Activated B cell treated with CpG ODN at 0.5 μM for 24 hours (primary cell): ENCODE measurements at regions of chr6 and their contacts with region 1.

Region 1: GRCh38 chr6:42166444-42167141 is 6.6 kb upstream of the GUCA1A start:
- DNase-seq: peak; percentile 50
- ATAC-seq: peak; percentile 91
- H3K4me3 Mint-ChIP-seq: no peak overlapping the region
- H3K27ac Mint-ChIP-seq: peak overlapping the region; percentile 31
- H3K4me1 Mint-ChIP-seq: no peaks in the 10 kb centered on the region
- H3K27me3 Mint-ChIP-seq: peaks cover 6% of the 10 kb centered on the region
- CTCF ChIP-seq: no peak

Region 2: GRCh38 chr6:41602864-41603608 is 563.6 kb before region 1 on chr6:
- CTCF ChIA-PET with region 1: no interaction called
- POLR2A ChIA-PET with region 1: no interaction called
- intact Hi-C with region 1: loop called (anchors 5 kb)
- DNase-seq: peak; percentile 55
- ATAC-seq: peak; percentile 85
- H3K4me3 Mint-ChIP-seq: peak overlapping the region; percentile 46
- H3K27ac Mint-ChIP-seq: no peak overlapping the region
- H3K4me1 Mint-ChIP-seq: peaks cover 10% of the 10 kb centered on the region
- H3K27me3 Mint-ChIP-seq: no peaks in the 10 kb centered on the region
- CTCF ChIP-seq: no peak

Region 3: GRCh38 chr6:42075159-42075838 is 91.3 kb before region 1 on chr6:
- CTCF ChIA-PET with region 1: interaction called, 3 read pairs
- POLR2A ChIA-PET with region 1: no interaction called
- intact Hi-C with region 1: loop called (anchors 1 kb)
- DNase-seq: peak; percentile 46
- ATAC-seq: no peak
- H3K4me3 Mint-ChIP-seq: no peak overlapping the region
- H3K27ac Mint-ChIP-seq: no peak overlapping the region
- H3K4me1 Mint-ChIP-seq: no peaks in the 10 kb centered on the region
- H3K27me3 Mint-ChIP-seq: no peaks in the 10 kb centered on the region
- CTCF ChIP-seq: no peak

Region 4: GRCh38 chr6:42104095-42104806 is 62.3 kb before region 1 on chr6:
- CTCF ChIA-PET with region 1: interaction called, 3 read pairs
- POLR2A ChIA-PET with region 1: no interaction called
- intact Hi-C with region 1: loop called (anchors 1 kb)
- DNase-seq: peak; percentile 56
- ATAC-seq: peak; percentile 84
- H3K4me3 Mint-ChIP-seq: peak overlapping the region; percentile 72
- H3K27ac Mint-ChIP-seq: no peak overlapping the region
- H3K4me1 Mint-ChIP-seq: peaks cover 5% of the 10 kb centered on the region
- H3K27me3 Mint-ChIP-seq: peaks cover 8% of the 10 kb centered on the region
- CTCF ChIP-seq: no peak

Region 5: DNA sequence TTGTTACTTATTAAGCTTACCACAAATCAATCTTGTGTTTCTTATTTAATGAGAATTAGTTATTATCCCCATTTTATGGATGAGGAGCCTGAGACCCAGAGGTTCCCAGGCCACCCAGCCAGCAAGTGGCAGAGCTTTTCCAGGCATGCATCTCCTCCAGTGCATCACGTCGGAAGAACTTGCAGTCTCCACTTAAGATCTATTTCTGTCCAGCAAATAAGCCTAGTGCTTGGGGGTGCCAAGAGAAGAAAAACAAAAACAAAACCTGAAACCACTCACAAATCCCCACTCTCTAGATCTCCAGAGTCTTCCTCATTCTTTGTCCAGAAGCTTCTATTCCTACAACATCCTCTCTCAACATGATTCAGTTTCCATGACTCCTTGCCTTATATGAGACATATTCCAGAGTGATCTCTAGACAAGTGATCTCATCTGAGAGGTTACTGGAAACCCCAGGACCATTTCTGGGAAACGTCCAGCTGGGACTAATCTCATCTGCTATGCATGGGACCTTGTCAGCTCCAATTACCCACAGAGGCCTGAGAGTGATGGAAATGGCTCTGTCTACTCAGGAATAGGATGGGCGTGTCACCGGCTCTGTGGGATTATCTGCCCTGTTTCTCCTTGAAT is 24.1 kb after region 1 on chr6:
- CTCF ChIA-PET with region 1: no interaction called
- POLR2A ChIA-PET with region 1: no interaction called
- intact Hi-C with region 1: no loop called
- DNase-seq: no peak
- ATAC-seq: no peak
- H3K4me3 Mint-ChIP-seq: no peak overlapping the region
- H3K27ac Mint-ChIP-seq: no peak overlapping the region
- H3K4me1 Mint-ChIP-seq: peaks cover 1% of the 10 kb centered on the region
- H3K27me3 Mint-ChIP-seq: no peaks in the 10 kb centered on the region
- CTCF ChIP-seq: no peak

Region 6: DNA sequence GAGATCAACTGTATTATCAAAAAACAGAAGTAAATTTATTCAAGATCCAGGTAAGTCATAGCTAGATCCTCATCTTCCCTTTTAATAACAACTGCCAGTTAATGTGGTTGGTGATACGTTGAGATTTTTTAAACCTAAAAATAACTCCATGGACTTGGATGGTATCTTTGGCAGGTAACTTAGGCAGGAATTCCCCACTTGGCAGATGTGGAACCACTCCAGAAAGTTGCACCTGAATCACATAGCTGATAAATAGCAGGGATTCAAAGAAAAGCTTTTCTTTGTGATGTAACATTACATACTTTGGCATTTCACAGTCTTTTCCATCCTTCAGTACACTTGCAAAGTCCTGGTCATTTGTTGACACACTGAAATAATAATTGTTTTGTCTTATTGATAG is 493.2 kb after region 1 on chr6:
- CTCF ChIA-PET with region 1: no interaction called
- POLR2A ChIA-PET with region 1: no interaction called
- intact Hi-C with region 1: no loop called
- DNase-seq: no peak
- ATAC-seq: no peak
- H3K4me3 Mint-ChIP-seq: no peak overlapping the region
- H3K27ac Mint-ChIP-seq: no peak overlapping the region
- H3K4me1 Mint-ChIP-seq: no peaks in the 10 kb centered on the region
- H3K27me3 Mint-ChIP-seq: no peaks in the 10 kb centered on the region
- CTCF ChIP-seq: no peak